Heart right ventricle (tissue), 16 donors: ENCODE measurements at regions of chr12 and their contacts with region 1.

Region 1: GRCh38 chr12:14845350-14845750 is 2.0 kb upstream of the ART4 start:
- DNase-seq: peak in 1 of 2 donors; percentile 66
- ATAC-seq: peak in 7 of 8 donors; percentile 38 to 68 (median 54)
- H3K4me3 ChIP-seq: no peak overlapping the region
- H3K27ac ChIP-seq: peak overlapping the region in 8 of 10 donors; percentile 1 to 72 (median 43)
- H3K4me1 ChIP-seq: peaks cover 7 to 76% (median 50%) of the 10 kb centered on the region in 9 donors
- H3K27me3 ChIP-seq: no peaks in the 10 kb centered on the region
- CTCF ChIP-seq: peak; percentile 49 to 82 (median 72)

Region 2: DNA sequence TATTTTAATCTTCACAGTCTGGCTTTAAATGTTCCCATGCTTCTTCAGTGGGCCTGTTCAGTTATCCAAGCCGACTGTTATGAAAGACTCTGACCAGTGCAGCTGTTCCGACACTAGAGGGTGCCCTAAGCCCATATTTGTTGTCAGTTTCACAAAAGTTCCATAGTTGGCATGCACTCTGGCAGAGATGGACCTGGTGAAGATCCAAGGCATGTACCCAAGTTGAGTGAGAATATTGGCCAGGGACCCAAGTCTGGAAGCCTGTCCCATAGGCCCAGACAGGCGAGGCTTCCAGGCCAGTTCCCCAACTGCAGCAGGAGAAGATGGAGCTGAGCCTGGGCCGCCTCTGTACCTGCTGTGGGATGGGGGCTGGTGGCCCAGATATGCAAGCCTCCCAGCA is 121.6 kb before region 1 on chr12:
- intact Hi-C with region 1: loop called in 1 of 10 experiments (anchors 5 kb)
- DNase-seq: peak; percentile 26 to 58
- ATAC-seq: peak; percentile 67 to 98 (median 84)
- H3K4me3 ChIP-seq: no peak overlapping the region
- H3K27ac ChIP-seq: no peak overlapping the region
- H3K4me1 ChIP-seq: no peaks in the 10 kb centered on the region
- H3K27me3 ChIP-seq: no peaks in the 10 kb centered on the region
- CTCF ChIP-seq: peak; percentile 41 to 76 (median 65)

Region 3: GRCh38 chr12:14803011-14803829 is 42.1 kb before region 1 on chr12 and contains the starts of genes C12orf60 and WBP11:
- intact Hi-C with region 1: loop called in 2 of 10 experiments (anchors 5 kb)
- DNase-seq: peak; percentile 84 to 97
- ATAC-seq: peak; percentile 100
- H3K4me3 ChIP-seq: peak within 1 kb of the TSS; percentile 69 to 98 (median 88)
- H3K27ac ChIP-seq: peak within 1 kb of the TSS; percentile 55 to 95 (median 88)
- H3K4me1 ChIP-seq: peaks cover 0 to 31% (median 26%) of the 10 kb centered on the region in 9 donors
- H3K27me3 ChIP-seq: no peaks in the 10 kb centered on the region
- CTCF ChIP-seq: no peak
- total RNA-seq, gene C12orf60: 1.2 to 5.8 (median 3.7) TPM
- total RNA-seq, gene WBP11: 47.6 to 62.3 (median 56.0) TPM

Region 4: GRCh38 chr12:14892726-14893505 is 47.6 kb after region 1 on chr12:
- intact Hi-C with region 1: loop called in 5 of 10 experiments (anchors 5 kb)
- DNase-seq: peak in 1 of 2 donors; percentile 57
- ATAC-seq: peak; percentile 77 to 87 (median 86)
- H3K4me3 ChIP-seq: peak overlapping the region in 1 of 10 donors; percentile 9
- H3K27ac ChIP-seq: peak overlapping the region; percentile 43 to 80 (median 74)
- H3K4me1 ChIP-seq: peaks cover 0 to 55% (median 11%) of the 10 kb centered on the region in 9 donors
- H3K27me3 ChIP-seq: no peaks in the 10 kb centered on the region
- CTCF ChIP-seq: peak in 4 of 9 donors; percentile 3 to 48 (median 32)

Region 5: GRCh38 chr12:14903386-14904098 is 58.2 kb after region 1 on chr12:
- intact Hi-C with region 1: no loop called
- DNase-seq: no peak
- ATAC-seq: no peak
- H3K4me3 ChIP-seq: no peak overlapping the region
- H3K27ac ChIP-seq: peak overlapping the region in 7 of 10 donors; percentile 31 to 90 (median 76)
- H3K4me1 ChIP-seq: peaks cover 2 to 61% (median 41%) of the 10 kb centered on the region in 9 donors
- H3K27me3 ChIP-seq: no peaks in the 10 kb centered on the region
- CTCF ChIP-seq: no peak

Region 6: GRCh38 chr12:14995583-14996425 is 150.5 kb after region 1 on chr12:
- intact Hi-C with region 1: loop called (anchors 1 to 5 kb)
- DNase-seq: no peak
- ATAC-seq: peak in 5 of 8 donors; percentile 16 to 67 (median 60)
- H3K4me3 ChIP-seq: no peak overlapping the region
- H3K27ac ChIP-seq: peak overlapping the region in 1 of 10 donors; percentile 23
- H3K4me1 ChIP-seq: peaks cover 0 to 25% (median 4%) of the 10 kb centered on the region in 9 donors
- H3K27me3 ChIP-seq: no peaks in the 10 kb centered on the region
- CTCF ChIP-seq: peak; percentile 64 to 85 (median 74)

Region 7: DNA sequence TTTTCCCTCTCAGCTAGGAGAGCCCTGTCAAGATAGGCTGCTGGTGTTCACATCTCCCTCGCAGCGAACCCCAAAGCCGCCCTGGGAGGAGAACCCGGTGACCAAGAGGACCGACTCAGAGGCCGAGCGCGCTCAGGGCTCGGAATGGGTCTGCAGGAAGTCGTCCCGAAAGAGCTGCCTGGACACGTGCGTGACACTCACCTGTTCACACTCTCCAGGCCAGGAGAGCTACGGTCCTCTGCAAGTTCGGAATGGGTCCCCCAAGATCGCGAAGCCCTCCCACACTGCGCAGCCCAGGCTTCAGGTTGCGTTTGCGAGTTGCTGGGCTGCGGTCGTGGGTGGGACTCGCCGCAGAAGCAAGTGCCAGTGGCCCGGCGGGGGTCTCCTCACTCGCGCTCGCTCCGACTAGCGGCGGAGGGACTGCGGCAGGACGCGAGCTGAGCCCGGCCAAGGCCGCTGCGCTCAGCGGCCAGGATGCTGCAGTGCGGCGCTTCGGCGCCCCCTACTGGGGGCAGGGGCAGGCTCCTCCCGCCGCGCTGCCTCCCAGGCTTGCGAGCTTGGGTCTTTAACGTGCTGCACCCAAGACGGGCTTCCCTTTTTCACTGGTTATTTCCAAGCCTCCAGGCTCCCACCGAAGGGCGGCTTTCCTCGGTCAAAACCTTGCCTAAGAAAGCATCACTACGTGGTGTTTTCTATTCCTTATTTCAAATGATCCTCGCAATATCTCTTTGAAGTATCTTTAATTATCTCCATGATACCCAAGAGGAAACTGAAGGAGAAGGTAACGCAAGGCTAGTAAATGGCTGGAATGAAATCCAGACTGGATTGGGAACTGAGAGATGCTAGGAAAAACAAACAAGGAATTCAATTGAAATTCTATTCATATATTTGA is 375.9 kb after region 1 on chr12 and contains the start of gene RERG:
- intact Hi-C with region 1: loop called in 5 of 10 experiments (anchors 2 to 10 kb)
- DNase-seq: peak; percentile 71 to 86
- ATAC-seq: peak; percentile 97 to 100 (median 98)
- H3K4me3 ChIP-seq: peak within 1 kb of the TSS; percentile 35 to 65 (median 61)
- H3K27ac ChIP-seq: peak within 1 kb of the TSS; percentile 51 to 82 (median 78)
- H3K4me1 ChIP-seq: peaks cover 0 to 14% (median 4%) of the 10 kb centered on the region in 9 donors
- H3K27me3 ChIP-seq: peaks cover 0 to 62% (median 0%) of the 10 kb centered on the region in 7 donors
- CTCF ChIP-seq: peak; percentile 94 to 99 (median 98)
- total RNA-seq, gene RERG: 2.1 to 4.8 (median 2.7) TPM

Region 8: DNA sequence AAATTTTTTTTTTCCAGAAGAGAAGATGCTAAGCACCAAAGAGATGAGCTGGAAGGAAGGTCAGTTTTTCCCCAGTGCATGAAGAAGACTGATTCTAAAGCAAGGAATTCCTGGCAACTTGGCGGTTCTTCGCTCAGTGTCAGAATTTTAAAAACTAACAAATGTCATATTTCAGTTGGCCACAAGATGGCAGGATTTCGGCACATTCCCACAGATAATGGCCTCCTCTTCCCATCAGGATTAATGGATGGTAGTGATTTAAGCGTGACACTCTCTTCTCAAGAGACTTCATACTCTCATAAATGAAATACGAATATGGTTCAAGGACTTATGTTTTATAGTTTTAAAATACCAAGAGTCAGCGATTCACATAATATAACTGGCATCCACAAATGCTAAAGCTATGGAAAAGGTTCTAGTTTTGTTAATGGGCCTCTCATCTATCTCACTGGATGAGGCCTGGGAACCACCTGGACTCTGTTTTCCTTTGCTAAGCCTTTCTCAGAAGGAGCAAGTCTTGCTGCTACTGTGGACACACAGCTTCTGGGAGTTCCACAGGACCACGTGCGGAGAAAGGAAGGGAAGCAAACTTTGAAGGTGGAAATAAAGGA is 430.8 kb after region 1 on chr12:
- intact Hi-C with region 1: loop called in 3 of 10 experiments (anchors 10 kb)
- DNase-seq: peak in 1 of 2 donors; percentile 35
- ATAC-seq: peak in 4 of 8 donors; percentile 21 to 42 (median 36)
- H3K4me3 ChIP-seq: no peak overlapping the region
- H3K27ac ChIP-seq: no peak overlapping the region
- H3K4me1 ChIP-seq: peaks cover 0 to 20% (median 15%) of the 10 kb centered on the region in 9 donors
- H3K27me3 ChIP-seq: peaks cover 0 to 6% (median 0%) of the 10 kb centered on the region in 7 donors
- CTCF ChIP-seq: peak; percentile 62 to 84 (median 75)

Region 9: GRCh38 chr12:15919418-15919817 is 1074.1 kb after region 1 on chr12:
- intact Hi-C with region 1: no loop called
- DNase-seq: no peak
- ATAC-seq: peak in 2 of 8 donors; percentile 20 to 37
- H3K4me3 ChIP-seq: no peak overlapping the region
- H3K27ac ChIP-seq: no peak overlapping the region
- H3K4me1 ChIP-seq: peaks cover 0 to 6% (median 0%) of the 10 kb centered on the region in 9 donors
- H3K27me3 ChIP-seq: no peaks in the 10 kb centered on the region
- CTCF ChIP-seq: no peak

Region 10: DNA sequence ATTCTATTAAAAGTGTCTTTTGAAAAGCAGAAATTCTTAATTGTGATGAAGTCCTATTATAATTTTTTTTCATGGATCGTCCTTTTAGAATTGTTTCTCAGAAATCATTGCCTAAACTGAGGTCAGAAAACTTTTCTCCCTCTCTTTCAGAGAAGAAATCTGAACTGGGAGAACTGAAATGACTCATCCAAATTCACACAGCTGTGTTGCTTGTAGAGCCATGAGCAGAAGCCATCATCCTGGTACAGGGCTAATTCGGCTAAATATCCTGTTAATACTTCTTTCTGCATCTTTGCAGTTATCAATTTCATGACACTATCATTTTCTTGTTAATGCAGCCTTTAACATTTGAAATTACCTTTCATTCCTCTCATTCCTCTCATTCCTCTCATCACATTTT is 1416.6 kb after region 1 on chr12:
- intact Hi-C with region 1: no loop called
- DNase-seq: no peak
- ATAC-seq: no peak
- H3K4me3 ChIP-seq: no peak overlapping the region
- H3K27ac ChIP-seq: no peak overlapping the region
- H3K4me1 ChIP-seq: no peaks in the 10 kb centered on the region
- H3K27me3 ChIP-seq: no peaks in the 10 kb centered on the region
- CTCF ChIP-seq: no peak